ENCODE measurements at regions of chr4 and their contacts with region 1.

Region 1: DNA sequence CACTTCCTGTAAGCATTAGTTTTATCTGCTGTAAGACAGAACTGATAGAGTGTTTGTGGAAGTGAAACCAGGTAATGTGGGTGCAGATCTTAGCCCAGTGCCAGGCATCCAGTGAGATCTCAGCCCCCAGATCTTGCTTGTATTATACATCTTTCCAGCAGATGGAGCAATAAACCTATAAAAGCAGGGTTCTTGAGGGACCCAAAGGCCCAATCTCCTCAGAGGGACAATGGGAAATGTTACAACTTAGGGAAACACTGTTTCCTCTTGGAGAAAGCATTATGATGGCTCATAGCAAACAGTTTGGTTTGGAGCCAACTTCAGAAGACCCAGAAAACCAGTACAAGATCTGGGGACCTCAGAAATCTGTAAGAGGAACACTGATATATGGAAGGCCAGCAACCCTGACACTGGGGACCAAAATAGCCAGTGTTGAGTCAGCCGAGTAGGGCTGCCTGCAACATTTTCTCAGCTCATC is 206.3 kb downstream of the SLC7A11 start:
- DNase-seq: peak; percentile 76
- H3K4me3 ChIP-seq: no peak overlapping the region
- H3K27ac ChIP-seq: no peak overlapping the region
- H3K4me1 ChIP-seq: no peaks in the 10 kb centered on the region
- H3K27me3 ChIP-seq: no peaks in the 10 kb centered on the region
- CTCF ChIP-seq: peak; percentile 67

Region 2: GRCh38 chr4:136562834-136563233 is 1473.0 kb before region 1 on chr4:
- CTCF ChIA-PET with region 1: no interaction called
- POLR2A ChIA-PET with region 1: no interaction called
- intact Hi-C with region 1: no loop called
- DNase-seq: peak; percentile 4
- H3K4me3 ChIP-seq: no peak overlapping the region
- H3K27ac ChIP-seq: no peak overlapping the region
- H3K4me1 ChIP-seq: no peaks in the 10 kb centered on the region
- H3K27me3 ChIP-seq: no peaks in the 10 kb centered on the region
- CTCF ChIP-seq: no peak

Region 3: GRCh38 chr4:138090150-138090917 is 54.5 kb after region 1 on chr4:
- CTCF ChIA-PET with region 1: interaction called, 15 read pairs
- POLR2A ChIA-PET with region 1: no interaction called
- intact Hi-C with region 1: loop called (anchors 1 kb)
- DNase-seq: peak; percentile 88
- H3K4me3 ChIP-seq: peak overlapping the region; percentile 38
- H3K27ac ChIP-seq: no peak overlapping the region
- H3K4me1 ChIP-seq: peaks cover 5% of the 10 kb centered on the region
- H3K27me3 ChIP-seq: no peaks in the 10 kb centered on the region
- CTCF ChIP-seq: peak; percentile 80

Region 4: DNA sequence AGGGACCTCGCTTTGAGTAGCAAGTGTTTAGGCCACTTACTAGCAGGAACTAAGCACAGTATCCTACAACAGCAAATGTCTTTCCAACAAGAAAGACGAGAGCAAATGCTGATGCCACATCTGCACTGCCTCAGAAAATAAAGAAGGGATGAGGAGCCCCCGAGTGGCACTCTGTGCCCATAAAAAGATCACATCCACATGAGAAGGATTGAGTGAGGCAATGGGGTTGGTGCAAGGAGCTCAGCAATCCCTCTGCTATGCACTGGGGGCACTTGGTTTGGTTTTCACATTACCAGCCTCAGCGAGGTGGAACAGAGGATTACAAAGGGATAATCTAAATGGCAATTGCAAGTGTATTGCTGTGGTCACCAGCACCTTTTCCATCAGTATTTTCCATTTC is 459.1 kb after region 1 on chr4:
- CTCF ChIA-PET with region 1: no interaction called
- POLR2A ChIA-PET with region 1: no interaction called
- intact Hi-C with region 1: loop called (anchors 5 kb)
- DNase-seq: peak; percentile 86
- H3K4me3 ChIP-seq: no peak overlapping the region
- H3K27ac ChIP-seq: no peak overlapping the region
- H3K4me1 ChIP-seq: peaks cover 14% of the 10 kb centered on the region
- H3K27me3 ChIP-seq: no peaks in the 10 kb centered on the region
- CTCF ChIP-seq: peak; percentile 61

Region 5: GRCh38 chr4:138680989-138681604 is 645.3 kb after region 1 on chr4:
- CTCF ChIA-PET with region 1: interaction called, 8 read pairs
- POLR2A ChIA-PET with region 1: no interaction called
- intact Hi-C with region 1: loop called (anchors 1 kb)
- DNase-seq: peak; percentile 80
- H3K4me3 ChIP-seq: no peak overlapping the region
- H3K27ac ChIP-seq: no peak overlapping the region
- H3K4me1 ChIP-seq: no peaks in the 10 kb centered on the region
- H3K27me3 ChIP-seq: no peaks in the 10 kb centered on the region
- CTCF ChIP-seq: peak; percentile 91

Region 6: DNA sequence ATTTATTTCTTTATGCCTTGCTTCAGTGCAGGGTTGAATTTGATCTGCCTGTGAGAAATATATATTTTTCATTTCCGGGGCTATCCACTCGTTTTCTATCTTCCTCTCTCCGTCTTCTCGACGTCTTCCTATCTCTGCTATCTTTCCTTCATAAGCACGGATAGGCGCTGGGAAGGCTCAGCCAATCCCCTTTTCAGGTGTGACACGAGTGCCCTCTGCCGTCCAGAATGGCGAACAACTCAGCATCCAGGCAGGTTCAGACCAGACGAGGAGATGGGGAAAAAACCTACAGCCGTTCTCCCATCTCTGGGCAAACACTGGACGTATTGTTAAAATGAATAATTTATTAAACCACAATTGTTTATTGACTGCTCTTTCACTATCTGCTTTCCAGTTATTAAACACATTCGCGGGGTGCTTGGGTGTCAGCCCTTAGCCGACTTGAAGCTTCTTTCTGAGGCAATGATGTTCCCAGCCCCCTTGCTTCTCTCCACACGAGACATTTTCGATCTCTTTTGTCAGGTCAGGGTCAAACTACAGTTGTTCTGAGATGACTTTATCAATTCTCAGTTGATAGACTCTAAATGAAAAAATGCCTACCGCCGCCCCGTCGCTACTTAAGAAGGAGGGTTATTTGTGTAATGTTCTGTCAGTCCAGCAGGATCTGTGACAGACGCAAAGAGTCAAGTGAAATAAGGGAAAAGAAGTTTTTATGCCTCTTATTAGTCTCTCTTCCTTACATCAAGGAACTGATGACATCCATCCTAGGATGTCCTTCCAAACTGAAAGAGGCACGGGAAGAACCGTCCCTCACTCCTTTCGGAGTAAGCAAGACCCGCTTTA is 883.5 kb after region 1 on chr4:
- CTCF ChIA-PET with region 1: no interaction called
- POLR2A ChIA-PET with region 1: no interaction called
- intact Hi-C with region 1: loop called (anchors 5 kb)
- DNase-seq: peak; percentile 87
- H3K4me3 ChIP-seq: peak overlapping the region; percentile 11
- H3K27ac ChIP-seq: no peak overlapping the region
- H3K4me1 ChIP-seq: no peaks in the 10 kb centered on the region
- H3K27me3 ChIP-seq: no peaks in the 10 kb centered on the region
- CTCF ChIP-seq: peak; percentile 93